HepG2 (cell line): ENCODE measurements at regions of chr12 and their contacts with region 1.

Region 1: DNA sequence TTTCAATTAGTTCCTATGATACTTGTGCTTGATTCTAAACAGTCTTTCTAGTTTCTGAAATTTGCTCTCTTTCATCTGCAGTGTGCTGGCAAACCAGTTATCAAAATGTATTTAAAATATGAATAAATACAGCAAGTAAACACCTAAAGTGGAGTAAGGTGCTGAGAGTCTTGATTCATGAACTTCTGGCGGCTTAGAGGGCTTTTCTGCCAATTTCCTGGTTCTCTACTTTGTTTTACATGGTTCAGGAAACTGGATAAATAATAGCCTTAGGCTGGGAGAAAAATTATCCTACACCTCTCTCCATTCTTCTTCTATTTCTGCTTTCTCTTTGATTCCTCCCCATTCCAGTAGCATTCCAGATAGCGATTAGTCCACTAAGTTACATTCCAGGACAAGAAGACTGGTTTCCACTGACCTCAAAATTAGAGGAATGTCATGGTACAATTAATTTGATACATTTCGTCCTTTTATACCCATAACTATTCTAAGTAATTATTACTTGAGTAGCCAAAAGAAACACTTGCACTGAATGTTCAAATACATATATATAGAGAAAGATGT is 14.9 kb downstream of the ATP2B1 start:
- DNase-seq: no peak
- ATAC-seq: no peak
- H3K4me3 ChIP-seq: no peak overlapping the region
- H3K27ac ChIP-seq: no peak overlapping the region
- H3K4me1 ChIP-seq: peaks cover 46% of the 10 kb centered on the region
- H3K27me3 ChIP-seq: no peaks in the 10 kb centered on the region
- CTCF ChIP-seq: no peak
- EP300 ChIP-seq: no peak
- POLR2A ChIP-seq: no peak
- RAD21 ChIP-seq: no peak

Region 2: DNA sequence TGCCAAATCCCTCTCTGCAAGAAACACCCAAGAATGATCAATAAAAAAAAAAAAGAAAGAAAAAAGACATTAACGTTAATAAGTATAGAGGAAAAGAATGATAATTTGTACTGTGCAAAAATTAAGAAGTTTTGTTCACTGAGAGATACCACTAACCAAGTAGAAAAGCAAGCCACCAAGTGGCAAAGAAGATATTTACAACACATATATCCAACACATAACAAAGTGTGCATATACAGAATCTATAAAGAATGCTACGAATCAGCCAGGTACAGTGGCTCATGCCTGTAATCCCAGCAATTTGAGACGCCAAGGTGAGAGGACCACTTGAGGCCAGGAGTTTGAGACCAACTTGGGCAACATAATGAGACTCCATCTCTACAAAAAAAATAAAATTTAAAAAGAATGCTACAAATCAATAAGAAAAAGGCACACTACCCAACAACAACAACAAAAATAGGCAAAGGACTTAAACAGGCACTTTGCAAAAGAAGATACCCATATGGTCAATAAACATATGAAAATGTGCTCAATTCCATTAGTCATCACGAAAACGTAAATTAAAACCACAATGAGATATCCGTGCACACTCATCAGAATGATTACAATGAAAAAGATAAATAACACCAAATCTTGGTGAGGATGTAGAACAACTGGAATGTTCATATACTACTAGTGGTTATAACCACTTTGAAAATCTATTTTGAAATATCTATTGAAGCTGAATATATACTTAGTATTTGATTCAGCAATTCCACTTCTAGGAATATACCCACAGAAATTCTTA is 189.0 kb before region 1 on chr12:
- CTCF ChIA-PET with region 1: no interaction called
- POLR2A ChIA-PET with region 1: no interaction called
- in situ Hi-C with region 1: no loop called
- intact Hi-C with region 1: no loop called
- DNase-seq: no peak
- ATAC-seq: peak; percentile 55; the same call in 2 of the 3 replicates
- H3K4me3 ChIP-seq: no peak overlapping the region
- H3K27ac ChIP-seq: no peak overlapping the region
- H3K4me1 ChIP-seq: peaks cover 20% of the 10 kb centered on the region
- H3K27me3 ChIP-seq: no peaks in the 10 kb centered on the region
- CTCF ChIP-seq: no peak
- EP300 ChIP-seq: no peak
- POLR2A ChIP-seq: no peak
- RAD21 ChIP-seq: no peak

Region 3: GRCh38 chr12:89648211-89648930 is 45.4 kb before region 1 on chr12:
- CTCF ChIA-PET with region 1: no interaction called
- POLR2A ChIA-PET with region 1: no interaction called
- in situ Hi-C with region 1: no loop called
- intact Hi-C with region 1: loop called (anchors 5 kb)
- DNase-seq: peak; percentile 56
- ATAC-seq: peak; percentile 88
- H3K4me3 ChIP-seq: no peak overlapping the region
- H3K27ac ChIP-seq: peak overlapping the region; percentile 56
- H3K4me1 ChIP-seq: peaks cover 78% of the 10 kb centered on the region
- H3K27me3 ChIP-seq: no peaks in the 10 kb centered on the region
- CTCF ChIP-seq: no peak
- EP300 ChIP-seq: no peak; a peak in 1 of 4 replicates
- POLR2A ChIP-seq: no peak
- RAD21 ChIP-seq: no peak

Region 4: DNA sequence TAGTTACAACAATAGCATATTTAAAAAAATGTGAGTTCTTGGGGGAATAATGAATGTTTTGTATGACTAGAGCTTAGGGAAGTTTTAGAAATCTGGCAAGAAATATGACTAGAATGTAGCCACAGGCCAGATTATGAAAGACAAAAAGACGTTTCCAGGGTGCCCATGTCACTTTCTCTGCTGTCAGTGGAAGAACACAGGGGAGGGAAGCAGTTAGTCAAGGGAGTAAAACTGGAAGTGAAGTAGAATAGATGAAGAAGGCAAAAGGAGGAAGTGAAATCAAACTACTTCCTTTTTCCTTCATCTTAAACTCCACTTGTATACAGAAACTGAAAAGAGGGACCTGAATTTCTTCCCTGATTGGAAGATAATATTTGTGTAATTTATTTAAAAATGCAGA is 96.1 kb after region 1 on chr12:
- CTCF ChIA-PET with region 1: no interaction called
- POLR2A ChIA-PET with region 1: no interaction called
- in situ Hi-C with region 1: no loop called
- intact Hi-C with region 1: no loop called
- DNase-seq: no peak
- ATAC-seq: no peak
- H3K4me3 ChIP-seq: no peak overlapping the region
- H3K27ac ChIP-seq: no peak overlapping the region
- H3K4me1 ChIP-seq: no peaks in the 10 kb centered on the region
- H3K27me3 ChIP-seq: no peaks in the 10 kb centered on the region
- CTCF ChIP-seq: no peak
- EP300 ChIP-seq: no peak
- POLR2A ChIP-seq: no peak
- RAD21 ChIP-seq: no peak